Lower leg skin (tissue), 4 donors: ENCODE measurements at regions of chr22 and their contacts with region 1.

Region 1: GRCh38 chr22:32319861-32320406 is 37.7 kb upstream of the RFPL3 start:
- DNase-seq: peak in 1 of 2 donors; percentile 25
- H3K4me3 ChIP-seq: no peak overlapping the region
- CTCF ChIP-seq: no peak
- POLR2A ChIP-seq: no peak

Region 2: DNA sequence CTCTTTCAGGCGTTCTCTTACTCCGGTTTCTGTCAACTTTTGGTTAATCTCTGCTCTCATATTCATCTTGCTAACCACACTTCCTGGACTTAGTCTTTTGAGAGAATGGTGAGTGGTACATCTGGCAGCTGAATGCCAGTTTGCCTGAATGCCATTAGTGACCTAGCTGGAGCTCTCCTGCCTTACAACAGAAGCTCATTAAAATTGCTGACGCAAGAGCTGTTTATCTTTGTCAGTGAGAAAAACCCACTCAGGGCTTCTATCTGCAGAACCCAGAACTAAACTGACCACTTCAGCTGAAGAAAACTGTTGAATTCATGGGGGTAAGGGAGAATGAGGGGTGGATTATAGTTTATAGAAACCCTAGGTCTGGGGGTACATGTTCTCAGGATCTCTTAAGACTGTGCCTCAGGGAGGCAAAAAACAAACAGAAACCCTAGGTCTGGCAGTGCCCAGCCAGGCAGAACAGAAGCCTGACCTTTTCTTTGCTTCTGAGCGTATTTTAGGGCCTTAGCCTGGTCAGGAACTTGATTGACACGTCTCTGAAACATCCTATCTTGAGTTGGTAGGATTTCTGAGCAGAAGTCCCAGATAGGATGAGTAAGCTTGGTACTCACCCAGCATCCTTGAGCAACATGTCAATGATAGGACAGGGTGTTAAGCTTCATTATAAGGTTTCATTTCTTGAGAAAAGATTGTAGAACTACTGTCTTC is 428.4 kb before region 1 on chr22:
- intact Hi-C with region 1: no loop called
- DNase-seq: no peak
- H3K4me3 ChIP-seq: no peak overlapping the region
- CTCF ChIP-seq: no peak
- POLR2A ChIP-seq: no peak

Region 3: GRCh38 chr22:32684822-32685187 is 364.9 kb after region 1 on chr22:
- intact Hi-C with region 1: loop called (anchors 5 kb)
- DNase-seq: no peak
- H3K4me3 ChIP-seq: no peak overlapping the region
- CTCF ChIP-seq: no peak
- POLR2A ChIP-seq: no peak